Sigmoid colon (tissue), 7 donors: ENCODE measurements at regions of chr4 and their contacts with region 1.

Region 1: DNA sequence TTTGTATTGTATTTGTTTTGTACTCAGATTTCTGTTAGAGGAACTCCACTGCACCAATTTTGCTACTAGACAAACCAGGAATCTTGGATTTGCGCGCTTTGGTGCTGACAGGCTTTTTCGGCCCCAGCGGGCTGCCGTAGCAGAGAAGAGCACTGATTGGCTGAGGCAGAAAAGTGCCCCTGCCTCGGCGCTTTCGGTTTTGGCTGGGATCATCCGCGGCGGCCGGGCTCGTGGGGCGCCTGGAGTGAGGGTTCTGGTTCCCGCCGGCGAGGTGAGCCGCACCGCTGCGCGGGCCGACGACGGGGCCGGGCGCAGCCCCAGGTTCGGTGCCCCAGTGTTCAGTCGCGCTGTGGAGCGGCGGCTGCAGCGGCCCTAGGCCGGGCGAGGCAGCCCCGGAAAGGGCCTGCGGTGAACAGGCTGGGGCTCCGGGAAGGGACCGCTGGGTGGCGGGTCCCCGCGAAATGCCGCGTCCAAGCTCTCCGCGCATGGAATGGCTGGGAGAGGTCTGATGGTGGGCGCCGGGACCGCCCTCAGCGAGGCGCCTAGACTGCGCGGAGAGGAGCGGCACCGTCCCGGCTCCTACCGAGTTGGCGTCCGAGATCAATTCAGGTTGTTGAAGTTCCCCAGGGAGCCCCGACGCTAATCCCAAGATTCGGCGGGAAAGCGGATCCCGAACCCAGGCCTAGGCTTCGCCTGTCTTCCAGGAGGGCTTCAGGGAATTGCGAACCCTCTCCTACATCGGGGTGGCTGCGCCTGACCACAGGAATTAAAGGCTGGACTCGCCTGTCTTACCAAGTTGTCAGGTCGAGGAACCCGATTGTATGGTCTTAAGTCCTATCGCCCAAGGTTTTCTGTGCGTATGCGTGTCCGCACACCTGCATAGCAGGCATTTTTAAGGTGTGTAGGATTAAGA is at the start of gene LSM6:
- DNase-seq: peak; percentile 91
- H3K4me3 ChIP-seq: peak within 1 kb of the TSS; percentile 87 to 92 (median 88)
- H3K27ac ChIP-seq: peak within 1 kb of the TSS; percentile 93 to 95 (median 93)
- H3K4me1 ChIP-seq: peaks cover 0 to 42% (median 33%) of the 10 kb centered on the region in 4 donors
- H3K27me3 ChIP-seq: no peaks in the 10 kb centered on the region
- CTCF ChIP-seq: no peak
- EP300 ChIP-seq: peak in 2 of 4 donors; percentile 13 to 33
- POLR2A ChIP-seq: peak in 1 of 2 donors; percentile 15
- total RNA-seq, gene LSM6: 16.9 to 51.5 (median 32.4) TPM

Region 2: GRCh38 chr4:144338148-144338547 is 1837.6 kb before region 1 on chr4:
- intact Hi-C with region 1: loop called (anchors 5 kb)
- DNase-seq: no peak
- H3K4me3 ChIP-seq: no peak overlapping the region
- H3K27ac ChIP-seq: no peak overlapping the region
- H3K4me1 ChIP-seq: no peaks in the 10 kb centered on the region
- H3K27me3 ChIP-seq: no peaks in the 10 kb centered on the region
- CTCF ChIP-seq: no peak
- EP300 ChIP-seq: no peak
- POLR2A ChIP-seq: no peak

Region 3: GRCh38 chr4:145868637-145869409 is 307.0 kb before region 1 on chr4:
- intact Hi-C with region 1: loop called (anchors 10 kb)
- DNase-seq: no peak
- H3K4me3 ChIP-seq: no peak overlapping the region
- H3K27ac ChIP-seq: no peak overlapping the region
- H3K4me1 ChIP-seq: peaks cover 0 to 31% (median 15%) of the 10 kb centered on the region in 4 donors
- H3K27me3 ChIP-seq: no peaks in the 10 kb centered on the region
- CTCF ChIP-seq: no peak
- EP300 ChIP-seq: no peak
- POLR2A ChIP-seq: no peak

Region 4: GRCh38 chr4:146124023-146124662 is 51.7 kb before region 1 on chr4:
- intact Hi-C with region 1: no loop called
- DNase-seq: no peak
- H3K4me3 ChIP-seq: no peak overlapping the region
- H3K27ac ChIP-seq: no peak overlapping the region
- H3K4me1 ChIP-seq: no peaks in the 10 kb centered on the region
- H3K27me3 ChIP-seq: no peaks in the 10 kb centered on the region
- CTCF ChIP-seq: no peak
- EP300 ChIP-seq: no peak
- POLR2A ChIP-seq: no peak

Region 5: GRCh38 chr4:146222313-146222712 is 46.5 kb after region 1 on chr4:
- intact Hi-C with region 1: no loop called
- DNase-seq: no peak
- H3K4me3 ChIP-seq: no peak overlapping the region
- H3K27ac ChIP-seq: no peak overlapping the region
- H3K4me1 ChIP-seq: no peaks in the 10 kb centered on the region
- H3K27me3 ChIP-seq: no peaks in the 10 kb centered on the region
- CTCF ChIP-seq: no peak
- EP300 ChIP-seq: no peak
- POLR2A ChIP-seq: no peak